ENCODE measurements at regions of chr15 and their contacts with region 1.

Region 1: GRCh38 chr15:38354315-38354929 is 99.5 kb upstream of the FAM98B start:
- DNase-seq: peak; percentile 55 to 58
- H3K4me3 ChIP-seq: no peak overlapping the region
- H3K27ac ChIP-seq: no peak overlapping the region
- H3K4me1 ChIP-seq: no peaks in the 10 kb centered on the region
- H3K27me3 ChIP-seq: no peaks in the 10 kb centered on the region
- CTCF ChIP-seq: peak in 5 of 6 experiments; percentile 37 to 65 (median 61)
- POLR2A ChIP-seq: no peak

Region 2: DNA sequence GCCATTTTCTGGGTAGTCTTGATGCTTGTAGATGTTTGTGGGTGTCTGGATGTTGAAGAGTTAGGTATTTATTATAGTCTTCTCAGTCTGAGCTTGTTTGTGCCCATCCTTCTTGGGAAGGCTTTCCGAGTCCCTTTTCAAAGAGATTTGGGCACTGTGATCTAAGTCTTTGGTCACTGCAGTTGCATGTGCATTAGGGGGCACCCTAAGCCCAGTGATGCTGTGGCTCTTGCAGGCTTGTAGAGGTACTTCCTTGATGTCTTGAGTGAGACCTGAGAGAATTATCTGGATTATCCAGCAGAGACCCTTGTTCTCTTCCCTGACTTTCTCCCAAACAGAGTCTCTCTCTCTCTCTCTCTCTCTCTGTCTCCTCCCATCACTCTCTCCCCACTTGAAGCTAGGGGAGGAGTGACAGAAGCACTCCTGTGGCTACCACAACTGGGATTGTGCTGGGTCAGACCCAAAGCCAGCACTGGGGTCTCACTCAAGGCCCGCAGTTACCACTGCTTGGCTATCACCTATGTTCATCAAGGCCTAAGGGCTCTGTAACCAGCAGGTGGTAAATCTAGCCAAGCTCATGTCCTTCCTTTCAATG is 351.4 kb before region 1 on chr15:
- intact Hi-C with region 1: loop called (anchors 10 kb)
- DNase-seq: peak; percentile 65 to 76
- H3K4me3 ChIP-seq: no peak overlapping the region
- H3K27ac ChIP-seq: no peak overlapping the region
- H3K4me1 ChIP-seq: no peaks in the 10 kb centered on the region
- H3K27me3 ChIP-seq: no peaks in the 10 kb centered on the region
- CTCF ChIP-seq: peak in 5 of 6 experiments; percentile 52 to 88 (median 70)
- POLR2A ChIP-seq: no peak

Region 3: GRCh38 chr15:38414357-38414756 is 59.9 kb after region 1 on chr15:
- intact Hi-C with region 1: loop called (anchors 10 kb)
- DNase-seq: peak; percentile 47 to 51
- H3K4me3 ChIP-seq: no peak overlapping the region
- H3K27ac ChIP-seq: no peak overlapping the region
- H3K4me1 ChIP-seq: no peaks in the 10 kb centered on the region
- H3K27me3 ChIP-seq: no peaks in the 10 kb centered on the region
- CTCF ChIP-seq: peak in 5 of 6 experiments; percentile 31 to 57 (median 47)
- POLR2A ChIP-seq: no peak

Region 4: DNA sequence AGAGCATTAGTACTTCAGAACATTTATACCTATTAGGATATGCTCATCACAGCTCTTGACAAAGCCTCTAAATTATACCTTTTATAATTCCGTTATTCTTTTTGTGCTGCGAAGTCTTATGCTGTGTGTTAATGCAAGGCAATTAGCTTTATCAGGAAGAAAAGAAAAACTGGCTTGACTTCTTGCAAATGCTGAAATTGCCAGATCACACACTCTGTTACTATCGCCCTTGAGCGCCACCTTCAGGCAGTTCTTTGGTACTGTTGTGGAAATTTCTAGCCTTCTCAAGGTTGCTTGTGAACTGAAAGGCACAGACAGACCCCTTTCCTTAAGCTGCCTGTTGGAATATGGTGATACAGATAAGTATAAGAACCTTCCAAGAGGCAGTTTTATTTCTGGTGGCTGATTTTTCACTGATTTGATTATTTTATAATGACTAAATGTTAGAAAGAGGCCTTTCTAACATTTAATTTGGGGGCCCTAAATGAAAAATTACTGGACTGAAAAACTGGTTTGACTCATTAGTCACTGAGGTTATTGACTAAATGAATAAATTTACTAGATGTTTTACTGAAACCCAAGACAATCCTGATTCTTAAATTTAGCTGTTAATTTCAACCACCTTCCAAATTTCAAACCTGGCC is 336.4 kb after region 1 on chr15:
- intact Hi-C with region 1: no loop called
- DNase-seq: peak; percentile 62 to 71
- H3K4me3 ChIP-seq: no peak overlapping the region
- H3K27ac ChIP-seq: no peak overlapping the region
- H3K4me1 ChIP-seq: no peaks in the 10 kb centered on the region
- H3K27me3 ChIP-seq: no peaks in the 10 kb centered on the region
- CTCF ChIP-seq: peak; percentile 30 to 78 (median 65)
- POLR2A ChIP-seq: no peak

Measured in thyroid gland (tissue), 4 donors.